CD4-positive, alpha-beta memory T cell (primary cell): ENCODE measurements at regions of chr2 and their contacts with region 1.

Region 1: GRCh38 chr2:197045115-197045514 is 118.6 kb upstream of the PGAP1 start:
- DNase-seq: no peak
- H3K4me3 ChIP-seq: no peak overlapping the region
- H3K4me3 Mint-ChIP-seq: no peak overlapping the region
- H3K27ac ChIP-seq: no peak overlapping the region
- H3K27ac Mint-ChIP-seq: peak overlapping the region in 5 of 7 donors; percentile 1 to 89 (median 61)
- H3K4me1 ChIP-seq: no peaks in the 10 kb centered on the region
- H3K4me1 Mint-ChIP-seq: peaks cover 6 to 16% (median 9%) of the 10 kb centered on the region in 4 donors
- H3K27me3 ChIP-seq: no peaks in the 10 kb centered on the region
- H3K27me3 Mint-ChIP-seq: no peaks in the 10 kb centered on the region

Region 2: DNA sequence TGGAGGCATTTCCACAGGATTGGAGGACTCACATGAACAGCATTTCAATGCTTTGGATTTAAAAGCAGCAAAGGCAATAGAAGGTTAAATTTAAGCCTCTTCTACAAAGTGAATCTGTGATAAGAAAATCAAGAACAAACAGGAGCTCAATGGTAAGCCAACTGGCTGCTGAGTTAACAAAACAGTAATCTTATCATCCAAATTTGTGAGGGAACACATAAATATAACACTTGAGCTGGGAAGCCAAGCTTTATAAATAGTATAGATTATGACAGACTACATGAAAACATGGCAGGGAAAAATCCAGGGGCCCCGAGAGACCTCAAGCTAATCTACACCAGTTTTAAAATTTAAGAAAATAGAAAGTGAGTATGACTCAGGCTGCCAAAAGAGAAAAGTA is 10.1 kb before region 1 on chr2:
- CTCF ChIA-PET with region 1: interaction called, 11 read pairs
- POLR2A ChIA-PET with region 1: no interaction called
- intact Hi-C with region 1: no loop called
- DNase-seq: no peak
- H3K4me3 ChIP-seq: no peak overlapping the region
- H3K4me3 Mint-ChIP-seq: no peak overlapping the region
- H3K27ac ChIP-seq: no peak overlapping the region
- H3K27ac Mint-ChIP-seq: peak overlapping the region in 6 of 7 donors; percentile 6 to 61 (median 26)
- H3K4me1 ChIP-seq: peaks cover 30% of the 10 kb centered on the region
- H3K4me1 Mint-ChIP-seq: peaks cover 35 to 65% (median 46%) of the 10 kb centered on the region in 4 donors
- H3K27me3 ChIP-seq: no peaks in the 10 kb centered on the region
- H3K27me3 Mint-ChIP-seq: no peaks in the 10 kb centered on the region

Region 3: GRCh38 chr2:197057959-197058358 is 12.8 kb after region 1 on chr2:
- CTCF ChIA-PET with region 1: interaction called, 3 read pairs
- POLR2A ChIA-PET with region 1: interaction called, 5 read pairs
- intact Hi-C with region 1: loop called (anchors 2 kb)
- DNase-seq: no peak
- H3K4me3 ChIP-seq: no peak overlapping the region
- H3K4me3 Mint-ChIP-seq: no peak overlapping the region
- H3K27ac ChIP-seq: no peak overlapping the region
- H3K27ac Mint-ChIP-seq: peak overlapping the region in 2 of 7 donors; percentile 17 to 35
- H3K4me1 ChIP-seq: peaks cover 27% of the 10 kb centered on the region
- H3K4me1 Mint-ChIP-seq: peaks cover 18 to 48% (median 28%) of the 10 kb centered on the region in 4 donors
- H3K27me3 ChIP-seq: no peaks in the 10 kb centered on the region
- H3K27me3 Mint-ChIP-seq: no peaks in the 10 kb centered on the region